ENCODE measurements at regions of chr13 and their contacts with region 1.

Region 1: DNA sequence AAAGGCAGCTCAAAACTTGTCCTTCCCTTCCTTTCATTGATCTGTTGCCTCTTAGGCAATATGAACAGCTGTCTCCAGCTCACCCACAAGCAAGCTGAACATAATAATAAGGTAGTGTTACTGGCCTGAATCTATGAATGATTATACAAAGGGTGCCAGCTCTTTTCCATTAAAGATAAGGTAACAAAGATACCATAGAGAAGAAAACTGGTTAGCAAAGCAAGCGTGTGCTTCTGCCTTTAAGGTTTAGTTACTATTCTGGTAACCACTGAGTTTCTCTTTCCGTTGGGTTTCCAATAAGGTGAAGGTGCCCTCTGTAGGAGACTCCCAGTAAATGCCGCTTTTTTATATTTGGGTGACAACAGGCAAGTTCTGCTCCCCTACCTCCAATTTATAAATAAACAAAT is 12.1 kb upstream of the DACH1 start:
- DNase-seq: peak; percentile 4
- ATAC-seq: peak; percentile 81
- H3K4me3 Mint-ChIP-seq: no peak overlapping the region
- H3K27ac Mint-ChIP-seq: no peak overlapping the region
- H3K4me1 Mint-ChIP-seq: peaks cover 5% of the 10 kb centered on the region
- H3K27me3 Mint-ChIP-seq: no peaks in the 10 kb centered on the region

Region 2: GRCh38 chr13:70623239-70623638 is 1255.9 kb before region 1 on chr13:
- CTCF ChIA-PET with region 1: no interaction called
- POLR2A ChIA-PET with region 1: no interaction called
- intact Hi-C with region 1: loop called in 1 of 2 experiments (anchors 1 kb)
- DNase-seq: no peak
- ATAC-seq: no peak
- H3K4me3 Mint-ChIP-seq: no peak overlapping the region
- H3K27ac Mint-ChIP-seq: no peak overlapping the region
- H3K4me1 Mint-ChIP-seq: no peaks in the 10 kb centered on the region
- H3K27me3 Mint-ChIP-seq: no peaks in the 10 kb centered on the region

Region 3: DNA sequence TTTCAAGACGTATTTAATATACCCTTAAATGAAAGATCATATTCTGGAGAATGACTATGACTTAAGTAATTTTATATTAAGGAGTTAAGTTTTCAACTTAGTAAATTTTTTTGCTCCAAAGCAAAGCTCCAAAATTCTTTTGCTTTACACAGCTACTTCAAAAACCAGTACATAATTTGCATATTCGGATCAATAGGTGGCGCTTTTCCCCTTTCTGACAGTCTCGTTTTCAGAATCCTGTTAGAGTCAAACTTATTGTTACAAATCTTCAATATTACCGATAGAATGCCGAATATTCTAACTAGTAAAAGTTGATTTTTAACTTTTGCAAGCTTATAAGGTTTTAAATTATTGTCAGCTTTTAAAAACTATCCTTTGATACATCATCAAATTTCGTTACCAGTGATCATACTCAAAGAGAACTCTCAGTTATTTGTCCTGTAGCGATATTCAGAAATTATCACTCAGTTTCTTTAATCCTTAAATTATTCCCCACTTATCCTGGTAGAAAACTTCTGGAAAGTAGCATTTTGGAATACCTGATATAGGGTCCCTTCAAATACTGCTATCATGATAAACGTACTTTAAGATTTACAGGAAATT is 918.2 kb before region 1 on chr13:
- CTCF ChIA-PET with region 1: no interaction called
- POLR2A ChIA-PET with region 1: no interaction called
- intact Hi-C with region 1: loop called in 1 of 2 experiments (anchors 1 kb)
- DNase-seq: no peak
- ATAC-seq: no peak
- H3K4me3 Mint-ChIP-seq: no peak overlapping the region
- H3K27ac Mint-ChIP-seq: no peak overlapping the region
- H3K4me1 Mint-ChIP-seq: no peaks in the 10 kb centered on the region
- H3K27me3 Mint-ChIP-seq: no peaks in the 10 kb centered on the region

Region 4: GRCh38 chr13:71320452-71320851 is 558.7 kb before region 1 on chr13:
- CTCF ChIA-PET with region 1: interaction called, 5 read pairs
- POLR2A ChIA-PET with region 1: no interaction called
- intact Hi-C with region 1: loop called (anchors 1 kb)
- DNase-seq: peak; percentile 18
- ATAC-seq: no peak
- H3K4me3 Mint-ChIP-seq: no peak overlapping the region
- H3K27ac Mint-ChIP-seq: no peak overlapping the region
- H3K4me1 Mint-ChIP-seq: no peaks in the 10 kb centered on the region
- H3K27me3 Mint-ChIP-seq: no peaks in the 10 kb centered on the region

Region 5: GRCh38 chr13:71867131-71867814 is 11.9 kb before region 1 on chr13 and contains the start of gene DACH1:
- CTCF ChIA-PET with region 1: interaction called, 11 read pairs
- POLR2A ChIA-PET with region 1: no interaction called
- intact Hi-C with region 1: no loop called
- DNase-seq: peak; percentile 54
- ATAC-seq: peak; percentile 47
- H3K4me3 Mint-ChIP-seq: peak within 1 kb of the TSS; percentile 81
- H3K27ac Mint-ChIP-seq: peak within 1 kb of the TSS; percentile 55
- H3K4me1 Mint-ChIP-seq: peaks cover 19% of the 10 kb centered on the region
- H3K27me3 Mint-ChIP-seq: peaks cover 48% of the 10 kb centered on the region
- total RNA-seq, gene DACH1: 0.09 to 0.21 TPM